HepG2 (cell line): ENCODE measurements at regions of chr22 and their contacts with region 1.

Region 1: DNA sequence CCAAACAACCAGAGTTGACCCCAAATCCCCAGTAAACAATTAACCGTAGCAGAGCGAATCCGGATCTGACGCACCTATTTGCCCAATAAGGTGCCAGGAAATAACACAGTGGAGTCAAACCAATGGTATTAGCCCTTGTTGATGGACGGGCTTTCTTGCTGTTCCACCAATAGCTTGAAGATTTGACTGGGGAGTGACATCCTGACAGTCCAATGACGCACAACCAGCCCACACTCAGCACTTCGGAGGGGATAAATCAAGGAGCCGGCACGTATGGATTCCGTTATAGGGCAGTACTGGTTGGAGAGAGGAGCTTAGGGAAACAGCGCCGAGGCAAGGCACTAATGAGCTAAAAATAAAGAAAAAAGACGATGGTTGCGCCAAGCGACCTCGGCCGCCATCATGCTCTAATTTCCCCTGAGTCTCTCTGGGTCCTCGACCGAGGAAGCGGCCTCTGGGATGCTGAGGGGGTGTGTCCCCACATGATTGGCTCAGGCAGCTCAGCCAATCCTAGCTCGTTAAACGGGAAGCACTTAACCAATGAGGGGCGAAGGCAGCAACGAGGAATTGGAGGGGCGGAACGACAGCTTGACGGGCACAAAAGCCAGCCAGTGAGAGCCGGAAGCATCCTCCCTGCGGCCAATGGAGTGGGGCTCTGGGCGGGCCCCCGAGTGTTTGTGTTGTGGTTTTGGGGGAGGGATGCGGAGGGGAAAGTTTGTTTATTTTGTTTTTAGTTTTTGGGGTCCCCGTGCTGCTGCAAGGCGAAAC is 49.5 kb downstream of the FAM83F start:
- DNase-seq: peak; percentile 98
- ATAC-seq: peak; percentile 95
- H3K4me3 ChIP-seq: peak overlapping the region; percentile 72 to 95 (median 73)
- H3K27ac ChIP-seq: peak overlapping the region; percentile 77
- H3K4me1 ChIP-seq: peaks cover 16% of the 10 kb centered on the region
- H3K27me3 ChIP-seq: peaks cover 0 to 3% of the 10 kb centered on the region in 2 experiments; a peak in 1 of 5 replicates
- CTCF ChIP-seq: no peak
- EP300 ChIP-seq: no peak
- POLR2A ChIP-seq: peak; percentile 59 to 86
- RAD21 ChIP-seq: no peak

Region 2: DNA sequence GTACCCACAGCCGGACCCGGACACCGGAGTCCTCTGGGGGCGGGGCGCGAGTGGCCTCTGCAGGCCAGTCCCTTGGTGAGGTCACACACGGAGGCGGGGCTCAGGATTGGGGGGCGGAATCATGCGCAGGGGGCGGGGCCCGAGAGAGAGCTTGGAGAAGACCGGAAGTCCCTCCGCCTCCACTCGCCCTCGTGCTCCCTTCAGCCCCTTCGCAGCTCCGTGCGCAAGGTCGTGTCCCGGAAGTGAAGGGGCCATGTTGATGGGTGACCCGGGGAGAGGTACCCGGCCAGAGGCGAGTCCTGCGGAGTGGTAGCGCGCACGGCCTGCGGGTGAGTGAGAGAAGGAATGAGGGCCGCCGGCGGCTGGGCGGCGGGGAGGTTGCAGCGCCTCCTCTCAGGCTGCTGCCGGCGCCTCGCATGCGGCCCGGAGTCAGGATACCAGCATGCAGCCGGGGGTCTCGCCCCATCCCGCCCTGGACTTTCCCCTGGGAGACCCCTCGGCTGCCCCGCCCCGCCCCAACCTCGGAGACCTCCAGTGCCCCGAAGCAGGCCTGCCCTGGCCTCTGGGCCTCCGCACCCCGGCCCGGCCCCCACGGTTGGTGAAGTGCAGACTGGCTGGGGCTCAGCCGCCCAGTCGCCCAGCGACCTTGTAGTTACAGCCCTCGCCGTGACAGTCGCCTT is 542.0 kb before region 1 on chr22 and contains the start of gene MIEF1:
- CTCF ChIA-PET with region 1: no interaction called
- POLR2A ChIA-PET with region 1: interaction called, 20 read pairs
- in situ Hi-C with region 1: no loop called
- intact Hi-C with region 1: no loop called
- DNase-seq: peak; percentile 96
- ATAC-seq: peak; percentile 95
- H3K4me3 ChIP-seq: peak within 1 kb of the TSS; percentile 80 to 93 (median 91)
- H3K27ac ChIP-seq: peak within 1 kb of the TSS; percentile 94
- H3K4me1 ChIP-seq: peaks cover 64% of the 10 kb centered on the region
- H3K27me3 ChIP-seq: no peaks in the 10 kb centered on the region
- CTCF ChIP-seq: no peak; the same call in 1 of the 2 replicates
- EP300 ChIP-seq: no peak
- POLR2A ChIP-seq: peak; percentile 71 to 85
- RAD21 ChIP-seq: no peak
- total RNA-seq, gene MIEF1: 34.8 and 41.4 TPM in 2 replicates

Region 3: GRCh38 chr22:39520054-39520891 is 524.0 kb before region 1 on chr22 and contains the start of gene ATF4:
- CTCF ChIA-PET with region 1: no interaction called
- POLR2A ChIA-PET with region 1: interaction called, 19 read pairs
- in situ Hi-C with region 1: no loop called
- intact Hi-C with region 1: no loop called
- DNase-seq: peak; percentile 98
- ATAC-seq: peak; percentile 87
- H3K4me3 ChIP-seq: peak within 1 kb of the TSS; percentile 98 to 100 (median 100)
- H3K27ac ChIP-seq: peak within 1 kb of the TSS; percentile 100
- H3K4me1 ChIP-seq: peaks cover 50% of the 10 kb centered on the region
- H3K27me3 ChIP-seq: no peaks in the 10 kb centered on the region; a peak in 1 of 5 replicates
- CTCF ChIP-seq: no peak
- EP300 ChIP-seq: no peak
- POLR2A ChIP-seq: peak; percentile 97 to 98
- RAD21 ChIP-seq: no peak
- total RNA-seq, gene ATF4: 442 and 486 TPM in 2 replicates

Region 4: DNA sequence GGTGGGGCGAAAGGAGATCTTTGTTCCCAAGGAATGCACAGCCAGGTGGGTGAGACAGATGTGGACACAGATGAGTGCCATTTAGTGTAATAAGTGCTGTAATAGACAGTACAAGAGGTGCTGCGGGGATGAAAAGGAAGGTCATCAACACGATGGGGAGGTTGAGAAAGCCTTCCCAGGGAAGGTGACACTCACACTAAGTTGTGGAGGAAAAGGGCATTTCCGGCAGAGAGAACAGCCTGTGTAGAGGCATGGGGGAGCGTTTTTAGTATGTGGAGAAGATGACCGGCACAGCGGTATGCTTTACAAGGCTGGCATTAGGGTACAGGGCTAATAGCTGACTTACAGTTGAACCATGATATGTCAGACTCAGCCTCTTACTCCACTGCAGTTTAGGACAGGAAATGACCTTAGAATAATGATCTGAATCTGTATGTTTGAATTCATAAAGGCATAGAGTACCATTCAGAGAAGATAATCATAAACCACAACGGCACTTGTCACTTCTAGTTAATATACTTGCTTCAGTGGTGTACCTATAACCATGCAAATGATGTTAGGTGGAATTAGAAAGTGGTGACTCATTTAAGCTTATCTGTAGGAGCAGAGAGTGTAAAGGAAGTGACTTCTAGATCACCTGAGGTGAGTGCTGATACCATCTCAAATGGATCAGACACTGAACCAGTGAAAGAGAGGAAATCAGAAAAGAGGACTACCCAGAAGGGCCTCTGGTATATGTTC is 11.0 kb after region 1 on chr22:
- CTCF ChIA-PET with region 1: no interaction called
- POLR2A ChIA-PET with region 1: interaction called, 14 read pairs
- in situ Hi-C with region 1: no loop called
- intact Hi-C with region 1: no loop called
- DNase-seq: no peak
- ATAC-seq: no peak
- H3K4me3 ChIP-seq: no peak overlapping the region
- H3K27ac ChIP-seq: no peak overlapping the region
- H3K4me1 ChIP-seq: peaks cover 26% of the 10 kb centered on the region
- H3K27me3 ChIP-seq: no peaks in the 10 kb centered on the region
- CTCF ChIP-seq: no peak
- EP300 ChIP-seq: no peak
- POLR2A ChIP-seq: no peak
- RAD21 ChIP-seq: no peak

Region 5: GRCh38 chr22:40177738-40178416 is 133.6 kb after region 1 on chr22 and contains the start of gene TNRC6B:
- CTCF ChIA-PET with region 1: no interaction called
- POLR2A ChIA-PET with region 1: interaction called, 35 read pairs
- in situ Hi-C with region 1: no loop called
- intact Hi-C with region 1: loop called (anchors 5 kb)
- DNase-seq: peak; percentile 98
- ATAC-seq: peak; percentile 94
- H3K4me3 ChIP-seq: peak within 1 kb of the TSS; percentile 75 to 97 (median 87)
- H3K27ac ChIP-seq: peak within 1 kb of the TSS; percentile 83
- H3K4me1 ChIP-seq: peaks cover 53% of the 10 kb centered on the region
- H3K27me3 ChIP-seq: no peaks in the 10 kb centered on the region; a peak in 1 of 5 replicates
- CTCF ChIP-seq: no peak
- EP300 ChIP-seq: 0 out of 4 replicates have a peak, but pooled peaks of 1 of the 2 experiments have one; percentile 24
- POLR2A ChIP-seq: peak; percentile 93 to 99
- RAD21 ChIP-seq: no peak
- total RNA-seq, gene TNRC6B: 13.2 and 17.2 TPM in 2 replicates

Region 6: DNA sequence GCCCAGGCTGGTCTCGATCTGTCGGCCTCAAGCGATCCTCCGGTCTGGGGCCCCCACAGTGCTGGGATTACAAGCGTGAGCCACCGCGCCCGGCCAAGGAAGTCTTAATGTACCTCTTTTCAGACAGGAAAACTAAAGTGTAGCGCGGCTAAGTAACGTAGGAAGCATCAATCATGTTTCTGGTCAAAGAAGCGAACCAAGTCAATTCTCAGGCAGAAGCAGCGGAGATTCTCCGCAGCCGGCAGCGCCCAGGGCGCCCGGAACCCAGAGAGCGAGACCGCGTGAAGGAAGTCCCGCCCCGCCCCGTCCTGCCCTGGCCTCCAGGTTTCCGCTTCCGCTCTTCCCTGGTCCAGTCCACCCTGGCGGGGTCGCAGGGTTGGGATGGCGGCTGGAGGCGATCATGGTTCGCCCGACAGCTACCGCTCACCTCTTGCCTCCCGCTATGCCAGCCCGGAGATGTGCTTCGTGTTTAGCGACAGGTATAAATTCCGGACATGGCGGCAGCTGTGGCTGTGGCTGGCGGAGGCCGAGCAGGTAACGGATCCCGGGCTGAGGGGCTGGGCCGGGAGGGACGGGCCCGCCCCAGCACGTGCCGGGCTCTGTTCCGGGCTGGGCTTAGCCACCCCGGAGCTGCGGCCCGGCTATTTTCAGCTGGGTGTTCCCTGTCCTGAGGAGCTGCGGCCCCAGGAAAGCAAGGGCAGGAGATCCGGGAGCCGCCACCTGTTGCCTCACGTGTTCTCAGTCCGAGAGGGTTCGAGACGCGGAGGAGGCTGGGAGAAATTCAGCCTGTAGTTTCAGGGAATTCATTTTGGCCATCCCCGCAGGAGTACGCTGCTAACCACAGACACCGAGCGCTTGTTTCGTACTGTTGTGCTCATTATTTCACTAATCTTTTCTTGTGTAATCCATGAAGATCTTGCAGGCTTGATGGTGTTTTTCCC is 302.2 kb after region 1 on chr22 and contains the start of gene ADSL:
- CTCF ChIA-PET with region 1: no interaction called
- POLR2A ChIA-PET with region 1: interaction called, 23 read pairs
- in situ Hi-C with region 1: no loop called
- intact Hi-C with region 1: loop called (anchors 5 kb)
- DNase-seq: peak; percentile 79
- ATAC-seq: peak; percentile 97
- H3K4me3 ChIP-seq: peak within 1 kb of the TSS; percentile 83 to 89 (median 84)
- H3K27ac ChIP-seq: peak within 1 kb of the TSS; percentile 81
- H3K4me1 ChIP-seq: peaks cover 57% of the 10 kb centered on the region
- H3K27me3 ChIP-seq: no peaks in the 10 kb centered on the region; a peak in 1 of 5 replicates
- CTCF ChIP-seq: 0 out of 2 replicates have a peak, but pooled peaks have one; percentile 9
- EP300 ChIP-seq: 0 out of 4 replicates have a peak, but pooled peaks of 1 of the 2 experiments have one; percentile 2
- POLR2A ChIP-seq: peak; percentile 97 to 99
- RAD21 ChIP-seq: no peak; the same call in 1 of the 2 replicates
- total RNA-seq, gene ADSL: 174 and 246 TPM in 2 replicates